Aorta (tissue), 5 donors: ENCODE measurements at regions of chr12 and their contacts with region 1.

Region 1: DNA sequence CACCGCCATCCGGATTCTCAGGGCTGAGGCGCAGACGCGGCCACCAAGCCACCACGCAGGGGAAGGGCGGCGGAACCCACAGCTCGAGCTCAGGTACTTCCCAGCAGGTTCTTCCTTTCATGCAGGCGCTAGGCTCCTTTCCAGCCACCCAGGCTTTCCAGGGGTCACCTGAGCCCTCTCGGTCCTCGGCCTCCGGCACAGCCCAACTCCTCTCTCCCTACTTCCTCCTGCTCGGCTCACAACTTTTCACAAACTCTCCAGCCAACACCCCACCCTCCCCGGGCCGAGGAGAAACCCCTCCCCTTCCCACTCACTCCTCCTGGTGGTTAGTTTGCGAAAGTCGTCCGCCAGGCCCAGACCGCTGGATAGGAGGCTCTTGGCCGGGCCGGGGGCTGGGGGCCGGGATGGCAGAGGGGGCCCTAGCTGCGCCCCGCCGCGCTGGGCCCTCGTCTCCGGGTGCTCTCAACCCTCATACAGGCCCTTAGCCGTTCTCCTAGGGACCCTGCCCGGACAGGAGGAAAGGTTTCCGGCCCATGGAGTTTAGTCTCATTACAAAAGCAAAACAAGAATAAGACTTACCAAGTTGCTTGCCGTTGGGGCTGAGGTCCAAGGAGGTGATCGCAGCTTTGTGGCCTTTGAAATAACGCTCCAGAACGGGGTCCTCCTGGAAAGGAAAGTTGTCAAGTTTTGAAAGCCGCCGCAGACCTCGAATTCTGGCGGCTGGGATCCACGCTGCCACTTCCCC is at the start of gene GALNT4:
- DNase-seq: peak; percentile 93 to 94
- ATAC-seq: peak; percentile 96
- H3K4me3 ChIP-seq: peak within 1 kb of the TSS; percentile 81 to 89
- H3K27ac ChIP-seq: peak within 1 kb of the TSS; percentile 62 to 94
- H3K4me1 ChIP-seq: no peaks in the 10 kb centered on the region
- H3K27me3 ChIP-seq: no peaks in the 10 kb centered on the region
- total RNA-seq, gene GALNT4: 7.4 TPM

Region 2: GRCh38 chr12:89019408-89020120 is 505.1 kb before region 1 on chr12:
- intact Hi-C with region 1: loop called in 1 of 2 experiments (anchors 5 kb)
- DNase-seq: peak; percentile 74
- ATAC-seq: peak; percentile 94
- H3K4me3 ChIP-seq: peak overlapping the region in 1 of 2 donors; percentile 8
- H3K27ac ChIP-seq: no peak overlapping the region
- H3K4me1 ChIP-seq: no peaks in the 10 kb centered on the region
- H3K27me3 ChIP-seq: no peaks in the 10 kb centered on the region

Region 3: GRCh38 chr12:89051065-89051677 is 473.5 kb before region 1 on chr12:
- intact Hi-C with region 1: loop called (anchors 5 kb)
- DNase-seq: no peak
- ATAC-seq: no peak
- H3K4me3 ChIP-seq: no peak overlapping the region
- H3K27ac ChIP-seq: no peak overlapping the region
- H3K4me1 ChIP-seq: no peaks in the 10 kb centered on the region
- H3K27me3 ChIP-seq: no peaks in the 10 kb centered on the region

Region 4: GRCh38 chr12:89162704-89163261 is 361.9 kb before region 1 on chr12:
- intact Hi-C with region 1: loop called in 1 of 2 experiments (anchors 10 kb)
- DNase-seq: peak; percentile 72 to 81
- ATAC-seq: peak; percentile 89
- H3K4me3 ChIP-seq: no peak overlapping the region
- H3K27ac ChIP-seq: no peak overlapping the region
- H3K4me1 ChIP-seq: peaks cover 0 to 2% of the 10 kb centered on the region in 2 donors
- H3K27me3 ChIP-seq: no peaks in the 10 kb centered on the region

Region 5: GRCh38 chr12:89345830-89346740 is 178.6 kb before region 1 on chr12:
- intact Hi-C with region 1: loop called (anchors 5 kb)
- DNase-seq: peak; percentile 71 to 73
- ATAC-seq: peak; percentile 63
- H3K4me3 ChIP-seq: no peak overlapping the region
- H3K27ac ChIP-seq: peak overlapping the region; percentile 24 to 42
- H3K4me1 ChIP-seq: peaks cover 1 to 14% of the 10 kb centered on the region in 2 donors
- H3K27me3 ChIP-seq: no peaks in the 10 kb centered on the region

Region 6: GRCh38 chr12:89470741-89471509 is 53.8 kb before region 1 on chr12:
- intact Hi-C with region 1: loop called (anchors 2 kb)
- DNase-seq: no peak
- ATAC-seq: peak; percentile 76
- H3K4me3 ChIP-seq: no peak overlapping the region
- H3K27ac ChIP-seq: no peak overlapping the region
- H3K4me1 ChIP-seq: no peaks in the 10 kb centered on the region
- H3K27me3 ChIP-seq: no peaks in the 10 kb centered on the region